Prostate gland (tissue), 2 donors: ENCODE measurements at regions of chr10 and their contacts with region 1.

Region 1: DNA sequence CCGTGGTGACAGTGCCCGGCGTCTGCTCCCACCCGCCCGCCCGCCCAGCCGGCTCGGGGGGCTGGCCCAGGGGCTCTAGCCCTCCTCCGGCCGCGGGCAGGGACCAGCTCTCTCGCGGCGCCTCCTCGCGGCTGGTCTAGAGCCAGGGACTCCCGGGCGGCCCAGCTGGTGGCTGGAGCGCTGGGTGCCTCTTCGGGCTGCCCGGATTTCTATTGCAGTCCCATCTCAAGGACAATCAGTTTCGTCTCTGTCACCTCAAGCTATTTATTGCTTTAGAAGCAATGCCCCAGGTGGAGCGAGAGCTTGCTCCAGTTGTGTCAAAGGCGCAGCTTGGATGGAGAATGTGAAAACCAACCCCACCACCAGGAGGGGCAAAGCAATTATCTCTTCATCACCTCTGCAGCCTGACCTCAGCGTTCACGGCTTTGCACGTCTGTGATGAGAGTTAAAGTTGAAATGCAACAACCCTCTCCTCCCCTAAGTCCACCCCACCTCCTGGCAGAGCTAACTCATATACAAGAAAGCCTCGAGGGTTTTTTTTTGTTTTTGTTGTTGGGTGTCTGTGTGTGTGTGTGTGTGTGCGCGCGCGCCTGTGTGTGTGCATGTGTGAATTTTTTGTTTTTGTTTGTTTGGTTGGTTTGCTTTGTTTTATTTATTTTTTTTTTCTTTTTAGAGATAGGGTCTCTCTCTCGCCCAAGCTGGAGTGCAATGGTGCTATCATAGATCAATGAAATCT is at the start of gene ITGA8:
- DNase-seq: peak; percentile 9
- H3K4me3 ChIP-seq: peak within 1 kb of the TSS; percentile 32 to 43
- H3K27ac ChIP-seq: peak within 1 kb of the TSS; percentile 44 to 56
- H3K4me1 ChIP-seq: no peaks in the 10 kb centered on the region
- H3K27me3 ChIP-seq: peaks cover 2% of the 10 kb centered on the region
- CTCF ChIP-seq: peak in 3 of 4 experiments; percentile 33 to 38 (median 37)
- POLR2A ChIP-seq: no peak
- total RNA-seq, gene ITGA8: 10.3 to 11.2 TPM

Region 2: GRCh38 chr10:15395935-15396334 is 324.1 kb before region 1 on chr10:
- intact Hi-C with region 1: no loop called
- DNase-seq: no peak
- H3K4me3 ChIP-seq: no peak overlapping the region
- H3K27ac ChIP-seq: no peak overlapping the region
- H3K4me1 ChIP-seq: no peaks in the 10 kb centered on the region
- H3K27me3 ChIP-seq: no peaks in the 10 kb centered on the region
- CTCF ChIP-seq: no peak
- POLR2A ChIP-seq: no peak

Region 3: GRCh38 chr10:15439341-15439842 is 280.7 kb before region 1 on chr10:
- intact Hi-C with region 1: loop called (anchors 2 kb)
- DNase-seq: no peak
- H3K4me3 ChIP-seq: peak overlapping the region; percentile 7 to 8
- H3K27ac ChIP-seq: peak overlapping the region in 1 of 2 donors; percentile 46
- H3K4me1 ChIP-seq: no peaks in the 10 kb centered on the region
- H3K27me3 ChIP-seq: no peaks in the 10 kb centered on the region
- CTCF ChIP-seq: no peak
- POLR2A ChIP-seq: no peak

Region 4: GRCh38 chr10:15485684-15486316 is 234.3 kb before region 1 on chr10:
- intact Hi-C with region 1: no loop called
- DNase-seq: no peak
- H3K4me3 ChIP-seq: no peak overlapping the region
- H3K27ac ChIP-seq: no peak overlapping the region
- H3K4me1 ChIP-seq: no peaks in the 10 kb centered on the region
- H3K27me3 ChIP-seq: no peaks in the 10 kb centered on the region
- CTCF ChIP-seq: no peak
- POLR2A ChIP-seq: no peak

Region 5: DNA sequence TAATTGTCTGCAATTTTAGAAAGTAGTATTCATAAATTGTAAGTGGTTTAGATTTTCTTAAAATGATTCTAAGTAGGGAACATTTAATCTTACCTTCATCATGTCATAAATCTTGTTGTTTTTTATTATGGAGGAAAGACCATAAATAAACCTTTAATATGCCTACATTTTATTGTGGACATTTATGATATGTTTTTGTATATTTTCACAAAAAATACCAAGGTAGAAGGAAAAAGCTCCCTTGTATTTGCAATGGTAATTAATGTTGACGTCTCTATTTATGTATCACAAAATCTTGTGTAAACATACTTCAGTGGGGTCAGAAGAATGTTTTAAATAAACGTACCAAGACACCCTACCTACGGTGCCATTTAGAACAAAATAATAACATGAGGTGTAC is 193.3 kb before region 1 on chr10:
- intact Hi-C with region 1: loop called (anchors 5 kb)
- DNase-seq: no peak
- H3K4me3 ChIP-seq: no peak overlapping the region
- H3K27ac ChIP-seq: no peak overlapping the region
- H3K4me1 ChIP-seq: no peaks in the 10 kb centered on the region
- H3K27me3 ChIP-seq: no peaks in the 10 kb centered on the region
- CTCF ChIP-seq: no peak
- POLR2A ChIP-seq: no peak

Region 6: GRCh38 chr10:15585303-15585715 is 134.8 kb before region 1 on chr10:
- intact Hi-C with region 1: loop called (anchors 2 kb)
- DNase-seq: peak; percentile 39
- H3K4me3 ChIP-seq: no peak overlapping the region
- H3K27ac ChIP-seq: no peak overlapping the region
- H3K4me1 ChIP-seq: no peaks in the 10 kb centered on the region
- H3K27me3 ChIP-seq: no peaks in the 10 kb centered on the region
- CTCF ChIP-seq: peak; percentile 46 to 72 (median 52)
- POLR2A ChIP-seq: no peak

Region 7: GRCh38 chr10:15763006-15763405 is 42.9 kb after region 1 on chr10:
- intact Hi-C with region 1: no loop called
- DNase-seq: no peak
- H3K4me3 ChIP-seq: no peak overlapping the region
- H3K27ac ChIP-seq: no peak overlapping the region
- H3K4me1 ChIP-seq: no peaks in the 10 kb centered on the region
- H3K27me3 ChIP-seq: no peaks in the 10 kb centered on the region
- CTCF ChIP-seq: no peak
- POLR2A ChIP-seq: no peak

Region 8: DNA sequence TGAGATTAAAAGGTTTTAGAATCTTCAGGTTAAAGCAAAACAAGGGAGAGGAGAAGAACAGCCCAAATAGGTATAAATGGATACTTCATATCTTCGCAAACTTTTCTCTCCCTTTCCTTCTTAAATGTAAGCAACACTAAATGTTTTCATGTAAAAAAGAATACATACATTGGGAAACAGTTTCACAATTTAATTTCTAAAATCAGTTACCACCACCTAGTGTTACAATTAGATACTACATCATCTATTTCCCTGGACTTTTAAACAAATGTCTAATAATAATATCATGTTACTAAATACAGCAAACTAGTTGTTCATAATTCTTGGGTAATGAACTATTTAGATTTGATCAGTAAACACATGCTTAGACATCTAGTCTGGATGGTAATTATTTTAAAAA is 104.4 kb after region 1 on chr10:
- intact Hi-C with region 1: loop called (anchors 5 kb)
- DNase-seq: no peak
- H3K4me3 ChIP-seq: no peak overlapping the region
- H3K27ac ChIP-seq: no peak overlapping the region
- H3K4me1 ChIP-seq: no peaks in the 10 kb centered on the region
- H3K27me3 ChIP-seq: no peaks in the 10 kb centered on the region
- CTCF ChIP-seq: peak in 3 of 4 experiments; percentile 55 to 59 (median 56)
- POLR2A ChIP-seq: no peak